A549 (cell line): ENCODE measurements at regions of chr4 and their contacts with region 1.

Region 1: DNA sequence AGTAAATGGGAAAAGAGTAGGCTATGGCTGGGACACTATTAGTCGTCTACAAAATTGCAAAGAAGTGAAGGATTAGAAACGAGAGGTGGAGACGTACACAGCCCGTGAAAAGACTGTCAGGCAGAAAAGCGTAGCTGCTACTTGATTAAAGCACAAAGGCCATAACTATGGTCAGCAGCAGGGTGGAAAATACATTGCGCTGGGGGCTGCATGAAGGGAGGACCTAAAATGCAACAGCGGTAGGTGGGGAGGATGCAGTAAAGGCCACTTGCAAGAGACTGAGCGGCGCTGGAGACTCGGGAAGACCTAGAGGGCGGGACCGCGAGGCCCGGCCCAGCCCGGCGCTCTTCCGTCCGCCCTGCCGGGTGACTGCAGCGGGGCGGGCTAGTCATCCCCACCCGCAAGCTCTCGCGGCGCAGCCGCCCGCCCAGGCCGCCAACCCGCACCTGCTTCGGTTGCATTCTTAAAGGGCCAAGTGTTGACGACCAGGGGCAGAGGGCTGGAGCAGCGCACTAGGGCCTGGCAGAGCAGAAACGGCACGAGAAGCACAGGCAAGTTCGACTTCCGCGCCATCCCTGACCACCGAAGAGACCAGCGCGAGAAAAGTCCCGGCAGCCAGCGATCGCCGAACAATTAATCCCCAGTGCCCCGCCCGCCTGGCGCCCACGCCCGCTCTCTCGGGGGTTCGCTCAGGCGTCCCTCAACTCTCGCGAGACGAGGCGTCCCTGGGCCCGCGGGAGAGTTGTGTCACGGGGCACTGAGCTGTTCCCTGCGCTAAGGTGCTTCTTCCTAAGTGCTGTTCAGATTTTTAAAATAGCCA is at the start of gene AGA:
- DNase-seq: peak; percentile 85 to 91
- ATAC-seq: peak; percentile 99
- H3K4me3 ChIP-seq: peak within 1 kb of the TSS; percentile 79
- H3K27ac ChIP-seq: peak within 1 kb of the TSS; percentile 87 to 96
- H3K4me1 ChIP-seq: peaks cover 7% of the 10 kb centered on the region; the same call in 1 of the 3 replicates
- CTCF ChIP-seq: no peak
- EP300 ChIP-seq: no peak
- POLR2A ChIP-seq: peak; percentile 63
- RAD21 ChIP-seq: 0 out of 5 replicates have a peak, but pooled peaks of 1 of the 2 experiments have one; percentile 9
- polyA plus RNA-seq, gene AGA: 36.8 and 44.0 TPM in 2 replicates

Region 2: GRCh38 chr4:177461606-177462005 is 19.6 kb after region 1 on chr4:
- CTCF ChIA-PET with region 1: no interaction called
- POLR2A ChIA-PET with region 1: interaction called, 11 read pairs
- DNase-seq: no peak
- ATAC-seq: no peak
- H3K4me3 ChIP-seq: no peak overlapping the region
- H3K27ac ChIP-seq: no peak overlapping the region
- H3K4me1 ChIP-seq: no peaks in the 10 kb centered on the region
- CTCF ChIP-seq: no peak
- EP300 ChIP-seq: no peak
- POLR2A ChIP-seq: no peak
- RAD21 ChIP-seq: no peak